OCI-LY7 (cell line): ENCODE measurements at regions of chr6 and their contacts with region 1.

Region 1: GRCh38 chr6:12028213-12028612 is 16.1 kb downstream of the HIVEP1 start:
- DNase-seq: no peak
- H3K4me3 ChIP-seq: no peak overlapping the region
- H3K27ac ChIP-seq: no peak overlapping the region
- H3K4me1 ChIP-seq: no peaks in the 10 kb centered on the region
- CTCF ChIP-seq: no peak

Region 2: GRCh38 chr6:11542863-11543262 is 485.4 kb before region 1 on chr6:
- CTCF ChIA-PET with region 1: no interaction called
- POLR2A ChIA-PET with region 1: interaction called, 10 read pairs
- intact Hi-C with region 1: no loop called
- DNase-seq: no peak
- H3K4me3 ChIP-seq: no peak overlapping the region
- H3K27ac ChIP-seq: no peak overlapping the region
- H3K4me1 ChIP-seq: no peaks in the 10 kb centered on the region
- CTCF ChIP-seq: no peak

Region 3: DNA sequence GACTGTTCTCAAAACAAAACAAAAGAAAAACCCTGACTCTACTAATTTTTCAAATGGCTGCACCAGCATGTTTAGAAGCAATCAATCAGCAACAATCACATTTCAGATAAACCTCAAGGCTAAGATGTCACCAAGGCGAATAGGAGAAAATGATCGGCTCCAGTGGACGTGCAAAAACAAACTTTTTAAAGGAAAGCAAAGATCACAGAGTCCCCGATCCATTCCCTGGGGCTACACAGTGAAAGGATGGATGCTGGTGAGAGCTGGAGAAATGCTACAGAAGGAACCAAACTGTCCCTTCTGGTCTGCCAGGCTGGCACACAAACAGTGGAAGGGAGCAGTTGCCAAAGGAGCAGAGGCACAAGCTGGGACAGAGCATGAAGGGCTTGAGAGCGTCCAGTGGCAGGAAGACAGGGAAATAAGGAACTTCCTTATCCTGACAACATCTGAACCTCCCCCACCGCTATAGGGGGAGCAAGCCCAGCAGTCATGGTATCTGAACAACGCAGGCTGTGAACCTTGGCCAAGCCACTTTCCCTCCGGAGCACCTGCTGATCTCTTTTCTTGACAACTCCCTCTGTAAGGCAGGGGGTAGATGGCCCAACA is 89.8 kb before region 1 on chr6:
- CTCF ChIA-PET with region 1: no interaction called
- POLR2A ChIA-PET with region 1: no interaction called
- intact Hi-C with region 1: no loop called
- DNase-seq: no peak
- H3K4me3 ChIP-seq: no peak overlapping the region
- H3K27ac ChIP-seq: no peak overlapping the region
- H3K4me1 ChIP-seq: no peaks in the 10 kb centered on the region
- CTCF ChIP-seq: no peak